GM12878 (cell line): ENCODE measurements at regions of chr12 and their contacts with region 1.

Region 1: GRCh38 chr12:121688966-121689365 is 19.5 kb upstream of the MORN3 start:
- DNase-seq: no peak
- ATAC-seq: no peak
- H3K4me3 ChIP-seq: no peak overlapping the region
- H3K27ac ChIP-seq: no peak overlapping the region
- H3K4me1 ChIP-seq: no peaks in the 10 kb centered on the region; the same call in 1 of the 2 replicates
- H3K27me3 ChIP-seq: no peaks in the 10 kb centered on the region
- CTCF ChIP-seq: no peak
- EP300 ChIP-seq: no peak
- POLR2A ChIP-seq: no peak
- RAD21 ChIP-seq: no peak

Region 2: DNA sequence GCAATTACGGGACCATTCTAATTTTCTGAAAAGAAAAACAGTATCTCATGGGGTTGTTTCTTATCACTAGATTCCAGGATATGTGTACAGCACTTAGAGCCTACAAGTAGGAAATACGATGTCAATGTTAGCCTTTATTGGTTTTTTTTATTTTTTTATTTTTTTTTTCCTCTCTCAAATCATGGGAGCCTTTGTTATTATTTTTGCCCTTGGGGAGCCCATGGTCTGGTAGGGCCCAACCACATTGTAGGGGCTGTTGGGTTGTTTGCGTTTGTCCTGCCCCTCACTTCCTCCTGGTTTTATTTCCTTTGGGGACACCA is 25.4 kb before region 1 on chr12:
- CTCF ChIA-PET with region 1: interaction called, 5 read pairs
- POLR2A ChIA-PET with region 1: interaction called, 10 read pairs
- RAD21 ChIA-PET with region 1: interaction called, 3 read pairs
- SMC1A ChIA-PET with region 1: interaction called, 4 read pairs
- in situ Hi-C with region 1: no loop called
- intact Hi-C with region 1: no loop called
- DNase-seq: no peak
- ATAC-seq: no peak
- H3K4me3 ChIP-seq: no peak overlapping the region
- H3K27ac ChIP-seq: peak overlapping the region; percentile 99
- H3K4me1 ChIP-seq: peaks cover 20% of the 10 kb centered on the region
- H3K27me3 ChIP-seq: no peaks in the 10 kb centered on the region
- CTCF ChIP-seq: no peak
- EP300 ChIP-seq: no peak
- POLR2A ChIP-seq: no peak
- RAD21 ChIP-seq: no peak

Region 3: DNA sequence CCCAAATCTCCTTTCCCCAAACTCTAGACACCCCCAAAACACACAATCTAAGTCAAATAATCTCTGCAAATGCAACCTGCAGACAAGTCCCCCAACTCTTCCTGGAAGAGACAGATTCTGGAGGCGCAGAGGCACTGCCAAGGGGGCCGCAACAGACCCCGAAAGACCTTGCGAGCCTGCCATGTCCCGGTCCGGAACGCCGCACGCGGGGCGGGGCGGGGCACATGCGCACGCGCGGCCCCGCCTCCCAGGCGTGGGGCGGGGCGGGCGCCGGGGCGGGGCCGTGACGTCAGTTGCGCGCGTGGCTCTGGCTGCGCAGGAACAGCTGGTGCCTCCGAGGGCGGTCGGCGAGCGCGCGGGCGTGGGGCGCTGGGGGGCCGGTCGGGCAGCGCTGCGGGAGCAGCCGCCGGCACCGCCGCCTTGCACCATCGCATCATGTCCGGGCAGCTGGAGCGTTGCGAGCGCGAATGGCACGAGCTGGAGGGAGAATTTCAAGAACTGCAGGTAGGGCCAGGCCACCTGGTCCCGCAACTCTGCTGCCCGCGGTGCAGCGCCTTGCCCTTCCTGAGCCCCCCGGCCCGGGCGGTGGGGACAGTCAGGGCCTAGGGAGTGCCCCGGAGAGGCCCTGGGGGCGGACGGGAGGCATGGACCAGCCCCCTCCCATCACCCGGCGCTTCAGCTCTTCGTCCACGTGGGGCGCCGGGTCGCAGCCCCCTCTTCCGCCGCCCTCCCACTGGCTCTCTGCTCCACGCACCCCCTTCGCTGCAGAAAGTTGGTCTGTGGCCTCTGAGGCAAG is 23.7 kb after region 1 on chr12 and contains the start of gene TMEM120B:
- CTCF ChIA-PET with region 1: interaction called, 3 read pairs
- POLR2A ChIA-PET with region 1: interaction called, 10 read pairs
- RAD21 ChIA-PET with region 1: interaction called, 4 read pairs
- SMC1A ChIA-PET with region 1: interaction called, 5 read pairs
- in situ Hi-C with region 1: no loop called
- intact Hi-C with region 1: no loop called
- DNase-seq: no peak
- ATAC-seq: peak; percentile 86
- H3K4me3 ChIP-seq: peak within 1 kb of the TSS; percentile 85
- H3K27ac ChIP-seq: peak within 1 kb of the TSS; percentile 32
- H3K4me1 ChIP-seq: peaks cover 16% of the 10 kb centered on the region; the same call in 1 of the 2 replicates
- H3K27me3 ChIP-seq: no peaks in the 10 kb centered on the region
- CTCF ChIP-seq: peak in 2 of 3 experiments; percentile 19 to 31; a peak in 2 of 6 replicates
- EP300 ChIP-seq: no peak
- POLR2A ChIP-seq: peak; percentile 88
- RAD21 ChIP-seq: no peak
- polyA plus RNA-seq, gene TMEM120B: 11.3 to 26.2 TPM

Region 4: DNA sequence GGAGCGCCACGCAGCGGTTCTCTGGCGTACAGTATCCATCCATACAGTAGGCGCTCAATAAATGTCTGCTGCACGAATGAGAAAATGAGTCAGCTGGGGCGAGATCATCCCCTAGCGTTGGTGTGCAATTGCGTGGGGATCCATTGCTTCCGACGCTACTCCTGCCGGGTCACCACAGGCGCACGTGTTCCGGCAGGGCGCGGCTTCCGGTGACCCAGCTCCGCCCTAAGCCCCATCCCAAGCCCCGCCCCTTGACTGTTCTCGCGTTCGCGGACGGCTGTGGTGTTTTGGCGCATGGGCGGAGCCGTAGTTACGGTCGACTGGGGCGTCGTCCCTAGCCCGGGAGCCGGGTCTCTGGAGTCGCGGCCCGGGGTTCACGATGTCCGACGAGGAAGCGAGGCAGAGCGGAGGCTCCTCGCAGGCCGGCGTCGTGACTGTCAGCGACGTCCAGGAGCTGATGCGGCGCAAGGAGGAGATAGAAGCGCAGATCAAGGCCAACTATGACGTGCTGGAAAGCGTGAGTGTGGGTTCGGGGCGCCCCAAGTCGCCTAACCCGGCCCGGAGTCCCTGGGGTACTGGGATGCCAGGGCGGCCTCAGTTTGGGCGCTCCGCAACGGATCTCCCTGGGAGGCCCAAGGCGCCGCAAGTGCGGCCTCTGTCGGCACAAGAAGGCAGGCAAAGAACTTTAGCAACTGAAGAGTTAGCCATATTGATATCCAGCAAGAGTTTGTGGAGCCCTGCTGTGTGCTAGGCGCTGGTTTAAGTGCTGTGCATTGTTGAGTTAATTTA is 199.7 kb after region 1 on chr12 and contains the start of gene PSMD9:
- CTCF ChIA-PET with region 1: no interaction called
- POLR2A ChIA-PET with region 1: no interaction called
- RAD21 ChIA-PET with region 1: no interaction called
- SMC1A ChIA-PET with region 1: no interaction called
- in situ Hi-C with region 1: no loop called
- intact Hi-C with region 1: loop called (anchors 5 kb)
- DNase-seq: peak; percentile 90
- ATAC-seq: peak; percentile 98
- H3K4me3 ChIP-seq: peak within 1 kb of the TSS; percentile 89
- H3K27ac ChIP-seq: peak within 1 kb of the TSS; percentile 84
- H3K4me1 ChIP-seq: peaks cover 5% of the 10 kb centered on the region; the same call in 1 of the 2 replicates
- H3K27me3 ChIP-seq: no peaks in the 10 kb centered on the region
- CTCF ChIP-seq: peak; percentile 68 to 73 (median 69)
- EP300 ChIP-seq: 0 out of 4 replicates have a peak, but pooled peaks of 1 of the 2 experiments have one; percentile 17
- POLR2A ChIP-seq: peak; percentile 98
- RAD21 ChIP-seq: peak; percentile 64
- polyA plus RNA-seq, gene PSMD9: 14.6 to 33.7 TPM